Ovary (tissue), 10 donors: ENCODE measurements at regions of chrX and their contacts with region 1.

Region 1: GRCh38 chrX:15854712-15855567 is at the start of gene AP1S2:
- DNase-seq: peak; percentile 91 to 94 (median 93)
- H3K4me3 ChIP-seq: peak within 1 kb of the TSS; percentile 65
- H3K27ac ChIP-seq: peak within 1 kb of the TSS; percentile 70 to 75
- H3K4me1 ChIP-seq: peaks cover 2% of the 10 kb centered on the region
- H3K27me3 ChIP-seq: no peaks in the 10 kb centered on the region
- CTCF ChIP-seq: no peak
- EP300 ChIP-seq: no peak
- POLR2A ChIP-seq: peak; percentile 31
- total RNA-seq, gene AP1S2: 13.0 to 25.1 (median 16.6) TPM

Region 2: DNA sequence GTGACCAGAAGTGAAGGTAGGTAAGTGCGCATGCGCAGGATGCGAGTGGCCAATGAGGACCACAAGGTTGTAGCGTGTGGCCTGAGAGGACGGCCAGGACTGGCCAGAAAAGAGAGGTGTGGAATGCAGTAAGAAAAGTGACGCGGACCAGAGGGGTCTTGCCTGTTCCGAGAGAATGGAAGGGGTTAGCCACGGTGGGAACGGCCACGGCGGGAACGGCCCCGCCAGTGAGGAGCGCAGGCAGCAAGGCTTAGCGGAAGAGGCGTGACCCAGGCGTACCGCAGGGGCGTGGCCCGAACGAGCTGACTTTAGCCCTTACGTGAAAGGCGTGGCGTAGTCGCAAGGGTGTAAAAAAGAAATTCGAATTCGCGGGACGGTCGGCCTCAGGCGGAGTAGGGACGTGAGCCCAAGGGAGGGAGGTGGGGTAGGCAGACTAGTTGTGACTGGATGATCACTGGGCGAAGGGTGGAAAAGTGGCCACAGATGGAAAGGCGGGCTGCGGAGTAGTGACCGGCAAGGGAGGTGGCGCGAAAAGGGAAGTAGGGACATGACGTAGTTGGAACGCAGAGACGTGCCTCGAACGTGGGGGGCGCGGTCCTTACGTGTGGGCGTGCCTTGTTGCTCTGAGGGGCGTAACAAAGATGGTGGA is 180.0 kb before region 1 on chrX:
- intact Hi-C with region 1: loop called in 1 of 4 experiments (anchors 5 kb)
- DNase-seq: peak; percentile 95 to 98 (median 98)
- H3K4me3 ChIP-seq: peak overlapping the region; percentile 67
- H3K27ac ChIP-seq: peak overlapping the region; percentile 94 to 100
- H3K4me1 ChIP-seq: peaks cover 6% of the 10 kb centered on the region
- H3K27me3 ChIP-seq: no peaks in the 10 kb centered on the region
- CTCF ChIP-seq: no peak
- EP300 ChIP-seq: peak; percentile 54
- POLR2A ChIP-seq: peak; percentile 74